Endothelial cell of umbilical vein (primary cell): ENCODE measurements at regions of chr2 and their contacts with region 1.

Region 1: GRCh38 chr2:55779459-55780421 is 86.1 kb upstream of the PNPT1 start:
- DNase-seq: peak; percentile 93
- H3K4me3 ChIP-seq: no peak overlapping the region
- H3K27ac ChIP-seq: peak overlapping the region; percentile 99
- H3K4me1 ChIP-seq: peaks cover 28% of the 10 kb centered on the region
- H3K27me3 ChIP-seq: no peaks in the 10 kb centered on the region
- CTCF ChIP-seq: no peak
- POLR2A ChIP-seq: peak; percentile 19

Region 2: DNA sequence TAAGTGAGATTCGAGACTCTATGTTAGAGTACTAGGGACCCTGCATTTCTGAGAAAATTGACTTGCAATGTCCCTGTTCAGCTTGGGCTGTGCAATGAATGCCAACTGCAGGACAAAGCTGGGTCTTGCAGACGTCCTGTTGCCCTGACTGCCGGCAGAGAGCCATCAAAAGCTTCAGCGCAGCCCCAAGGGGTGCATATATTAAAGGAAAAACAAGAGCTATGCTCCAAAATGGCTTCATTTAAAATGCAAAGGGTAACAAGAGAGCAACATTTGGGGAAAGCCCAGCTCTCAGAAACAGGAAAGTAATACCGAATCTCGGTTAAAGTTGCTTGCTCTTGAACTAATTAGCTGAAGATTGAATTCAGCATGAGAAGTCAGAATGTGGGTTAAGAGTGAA is 24.8 kb after region 1 on chr2:
- CTCF ChIA-PET with region 1: no interaction called
- POLR2A ChIA-PET with region 1: no interaction called
- dilution Hi-C with region 1: no loop called
- intact Hi-C with region 1: no loop called
- DNase-seq: no peak
- H3K4me3 ChIP-seq: no peak overlapping the region
- H3K27ac ChIP-seq: no peak overlapping the region
- H3K4me1 ChIP-seq: no peaks in the 10 kb centered on the region
- H3K27me3 ChIP-seq: no peaks in the 10 kb centered on the region
- CTCF ChIP-seq: no peak
- POLR2A ChIP-seq: no peak

Region 3: GRCh38 chr2:55862673-55863390 is 83.1 kb after region 1 on chr2:
- CTCF ChIA-PET with region 1: interaction called, 6 read pairs
- POLR2A ChIA-PET with region 1: no interaction called
- dilution Hi-C with region 1: no loop called
- intact Hi-C with region 1: loop called (anchors 1 kb)
- DNase-seq: peak; percentile 98
- H3K4me3 ChIP-seq: no peak overlapping the region
- H3K27ac ChIP-seq: peak overlapping the region; percentile 92
- H3K4me1 ChIP-seq: peaks cover 54% of the 10 kb centered on the region
- H3K27me3 ChIP-seq: no peaks in the 10 kb centered on the region
- CTCF ChIP-seq: no peak
- POLR2A ChIP-seq: peak; percentile 80